Activated CD4-positive, alpha-beta T cell treated with anti-CD3 and anti-CD28 coated beads, Interleukin-2, amount 10 ng/mL, durations not matched to agents 7 days and 5 days (primary cell): ENCODE measurements at regions of chr14 and their contacts with region 1.

Region 1: GRCh38 chr14:70907176-70907995 is at the start of gene PCNX1:
- DNase-seq: peak; percentile 91
- H3K4me3 Mint-ChIP-seq: peak within 1 kb of the TSS; percentile 80
- H3K27ac Mint-ChIP-seq: peak within 1 kb of the TSS; percentile 96
- H3K4me1 Mint-ChIP-seq: peaks cover 56% of the 10 kb centered on the region
- H3K27me3 Mint-ChIP-seq: no peaks in the 10 kb centered on the region
- total RNA-seq, gene PCNX1: 56.6 to 72.1 TPM

Region 2: DNA sequence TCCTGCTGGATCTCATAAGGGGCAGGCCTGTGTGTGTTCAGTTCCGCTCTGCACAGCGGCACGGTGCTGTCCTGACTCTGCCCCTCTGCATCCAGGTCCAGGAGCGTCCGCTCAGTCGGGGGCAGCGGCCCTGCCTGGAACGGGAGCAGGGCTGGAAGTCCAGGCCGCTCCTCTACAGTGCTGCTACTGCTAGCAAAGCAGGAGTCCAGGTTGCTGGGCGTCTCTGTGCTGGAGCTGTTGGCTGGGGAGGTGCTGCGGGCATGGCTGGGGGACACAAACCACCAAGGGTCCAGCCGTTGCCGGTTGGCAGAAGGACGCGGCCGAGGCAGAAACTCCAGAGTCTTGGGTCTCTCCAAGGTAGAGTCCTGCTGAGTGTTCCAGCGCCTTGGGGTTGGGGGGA is 177.0 kb before region 1 on chr14:
- CTCF ChIA-PET with region 1: no interaction called
- POLR2A ChIA-PET with region 1: no interaction called
- DNase-seq: no peak
- H3K4me3 Mint-ChIP-seq: no peak overlapping the region
- H3K27ac Mint-ChIP-seq: no peak overlapping the region
- H3K4me1 Mint-ChIP-seq: no peaks in the 10 kb centered on the region
- H3K27me3 Mint-ChIP-seq: no peaks in the 10 kb centered on the region

Region 3: GRCh38 chr14:70809543-70810244 is 97.7 kb before region 1 on chr14:
- CTCF ChIA-PET with region 1: interaction called, 11 read pairs
- POLR2A ChIA-PET with region 1: no interaction called
- DNase-seq: peak; percentile 92
- H3K4me3 Mint-ChIP-seq: no peak overlapping the region
- H3K27ac Mint-ChIP-seq: peak overlapping the region; percentile 85
- H3K4me1 Mint-ChIP-seq: peaks cover 12% of the 10 kb centered on the region
- H3K27me3 Mint-ChIP-seq: peaks cover 4% of the 10 kb centered on the region

Region 4: GRCh38 chr14:70816525-70816924 is 90.9 kb before region 1 on chr14:
- CTCF ChIA-PET with region 1: interaction called, 22 read pairs
- POLR2A ChIA-PET with region 1: no interaction called
- DNase-seq: no peak
- H3K4me3 Mint-ChIP-seq: no peak overlapping the region
- H3K27ac Mint-ChIP-seq: no peak overlapping the region
- H3K4me1 Mint-ChIP-seq: peaks cover 23% of the 10 kb centered on the region
- H3K27me3 Mint-ChIP-seq: peaks cover 14% of the 10 kb centered on the region

Region 5: GRCh38 chr14:70887207-70887681 is 20.1 kb before region 1 on chr14:
- CTCF ChIA-PET with region 1: interaction called, 61 read pairs
- POLR2A ChIA-PET with region 1: interaction called, 3 read pairs
- DNase-seq: no peak
- H3K4me3 Mint-ChIP-seq: peak overlapping the region; percentile 66
- H3K27ac Mint-ChIP-seq: peak overlapping the region; percentile 95
- H3K4me1 Mint-ChIP-seq: peaks cover 93% of the 10 kb centered on the region
- H3K27me3 Mint-ChIP-seq: no peaks in the 10 kb centered on the region

Region 6: DNA sequence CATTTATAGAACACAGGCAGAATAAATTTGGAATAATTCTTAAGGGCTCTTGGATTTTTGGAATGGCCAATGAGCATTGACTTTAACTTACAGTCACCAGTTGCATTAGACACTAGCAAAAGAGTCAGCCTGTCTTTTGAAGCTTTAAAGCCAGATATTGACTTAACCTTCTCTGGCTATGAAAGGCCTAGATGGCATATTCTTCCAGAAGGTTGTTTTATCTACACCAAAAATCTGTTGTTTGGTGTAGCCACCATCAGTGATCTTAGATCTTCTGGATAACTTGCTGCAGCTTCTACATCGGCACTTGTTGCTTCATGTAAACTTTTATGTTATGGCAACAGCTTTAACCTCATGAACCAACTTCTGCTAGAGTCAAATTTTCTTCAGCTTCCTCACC is 10.2 kb after region 1 on chr14:
- CTCF ChIA-PET with region 1: interaction called, 12 read pairs
- POLR2A ChIA-PET with region 1: no interaction called
- DNase-seq: no peak
- H3K4me3 Mint-ChIP-seq: no peak overlapping the region
- H3K27ac Mint-ChIP-seq: no peak overlapping the region
- H3K4me1 Mint-ChIP-seq: peaks cover 71% of the 10 kb centered on the region
- H3K27me3 Mint-ChIP-seq: no peaks in the 10 kb centered on the region

Region 7: GRCh38 chr14:70924521-70924920 is 17.1 kb after region 1 on chr14:
- CTCF ChIA-PET with region 1: interaction called, 11 read pairs
- POLR2A ChIA-PET with region 1: no interaction called
- DNase-seq: no peak
- H3K4me3 Mint-ChIP-seq: no peak overlapping the region
- H3K27ac Mint-ChIP-seq: no peak overlapping the region
- H3K4me1 Mint-ChIP-seq: peaks cover 57% of the 10 kb centered on the region
- H3K27me3 Mint-ChIP-seq: no peaks in the 10 kb centered on the region

Region 8: GRCh38 chr14:70952485-70952884 is 45.1 kb after region 1 on chr14:
- CTCF ChIA-PET with region 1: interaction called, 18 read pairs
- POLR2A ChIA-PET with region 1: no interaction called
- DNase-seq: no peak
- H3K4me3 Mint-ChIP-seq: no peak overlapping the region
- H3K27ac Mint-ChIP-seq: no peak overlapping the region
- H3K4me1 Mint-ChIP-seq: peaks cover 28% of the 10 kb centered on the region
- H3K27me3 Mint-ChIP-seq: no peaks in the 10 kb centered on the region

Region 9: GRCh38 chr14:71117839-71118743 is 210.7 kb after region 1 on chr14:
- CTCF ChIA-PET with region 1: no interaction called
- POLR2A ChIA-PET with region 1: no interaction called
- DNase-seq: no peak
- H3K4me3 Mint-ChIP-seq: no peak overlapping the region
- H3K27ac Mint-ChIP-seq: no peak overlapping the region
- H3K4me1 Mint-ChIP-seq: no peaks in the 10 kb centered on the region
- H3K27me3 Mint-ChIP-seq: no peaks in the 10 kb centered on the region